Dorsolateral prefrontal cortex (tissue), 120 donors: ENCODE measurements at regions of chr13 and their contacts with region 1.

Region 1: DNA sequence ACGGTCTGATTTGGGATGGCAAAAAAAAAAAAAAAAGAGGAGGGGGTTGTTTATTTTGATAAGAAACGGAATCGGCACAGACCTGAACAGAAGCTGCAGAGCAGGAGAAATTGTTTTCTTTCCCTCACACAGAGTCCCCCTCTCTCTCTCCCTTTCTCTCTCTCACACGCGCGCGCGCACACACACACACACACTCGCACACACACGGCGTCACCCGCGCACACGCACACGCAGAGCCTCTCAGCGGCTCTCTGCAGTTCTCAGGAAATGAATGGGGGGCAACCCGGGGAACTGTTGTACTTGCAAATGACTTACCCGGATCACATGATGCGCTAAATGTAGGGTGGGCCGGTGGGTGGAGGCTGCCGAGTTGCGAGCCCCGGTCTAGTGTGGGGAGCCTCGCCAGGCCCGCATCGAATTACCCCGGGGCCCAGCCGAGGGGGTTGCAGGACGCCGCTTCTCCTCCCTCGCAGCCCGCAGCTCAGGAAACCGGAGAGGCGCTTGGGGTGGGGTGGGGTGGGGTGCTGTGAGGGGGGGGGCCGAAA is 475 bp downstream of the KLF12 start:
- DNase-seq: peak; percentile 34 to 82 (median 72)
- H3K4me3 ChIP-seq: peak overlapping the region; percentile 65 to 91 (median 80)
- H3K27ac ChIP-seq: peak overlapping the region in 56 of 59 donors; percentile 41 to 94 (median 86)
- H3K27me3 ChIP-seq: no peaks in the 10 kb centered on the region
- CTCF ChIP-seq: no peak

Region 2: GRCh38 chr13:73765651-73766384 is 367.9 kb before region 1 on chr13:
- intact Hi-C with region 1: loop called (anchors 10 kb)
- DNase-seq: peak; percentile 53 to 84 (median 70)
- H3K4me3 ChIP-seq: peak overlapping the region in 52 of 59 donors; percentile 0 to 57 (median 22)
- H3K27ac ChIP-seq: peak overlapping the region in 58 of 59 donors; percentile 1 to 88 (median 74)
- H3K27me3 ChIP-seq: no peaks in the 10 kb centered on the region
- CTCF ChIP-seq: peak in 2 of 56 donors; percentile 9 to 22

Region 3: GRCh38 chr13:74575729-74576125 is 442.0 kb after region 1 on chr13:
- intact Hi-C with region 1: loop called in 1 of 2 experiments (anchors 10 kb)
- DNase-seq: peak; percentile 45 to 91 (median 80)
- H3K4me3 ChIP-seq: peak overlapping the region; percentile 38 to 76 (median 57)
- H3K27ac ChIP-seq: peak overlapping the region in 57 of 59 donors; percentile 11 to 90 (median 78)
- H3K27me3 ChIP-seq: no peaks in the 10 kb centered on the region
- CTCF ChIP-seq: peak in 4 of 56 donors; percentile 8 to 12 (median 10)